ENCODE measurements at regions of chr20 and their contacts with region 1.

Region 1: DNA sequence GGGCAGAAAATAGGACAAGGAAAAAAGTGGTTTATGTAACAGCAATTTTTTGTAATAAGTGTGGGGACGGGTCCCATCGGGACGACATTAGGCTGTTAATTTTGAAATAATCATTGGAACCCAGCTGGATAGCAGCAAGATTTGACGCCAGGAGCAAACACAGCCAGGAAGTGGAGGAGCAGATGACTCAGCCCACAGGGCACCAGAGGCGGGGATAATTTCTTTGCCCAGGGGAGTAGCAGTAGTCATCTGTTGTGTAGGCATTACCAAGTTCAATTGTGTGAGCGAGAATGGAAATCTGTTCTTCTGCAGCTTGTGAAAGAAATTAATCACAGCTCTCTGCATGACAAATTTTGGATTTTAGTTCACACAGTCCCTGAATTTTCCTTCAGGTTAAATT is 22.6 kb upstream of the RIN2 start:
- DNase-seq: peak; percentile 3
- ATAC-seq: peak; percentile 77
- H3K4me3 ChIP-seq: no peak overlapping the region
- H3K27ac ChIP-seq: no peak overlapping the region
- H3K4me1 ChIP-seq: no peaks in the 10 kb centered on the region
- H3K27me3 ChIP-seq: no peaks in the 10 kb centered on the region
- CTCF ChIP-seq: no peak
- EP300 ChIP-seq: no peak
- POLR2A ChIP-seq: no peak
- RAD21 ChIP-seq: no peak

Region 2: GRCh38 chr20:19583532-19584175 is 151.8 kb before region 1 on chr20:
- CTCF ChIA-PET with region 1: no interaction called
- POLR2A ChIA-PET with region 1: no interaction called
- RAD21 ChIA-PET with region 1: no interaction called
- SMC1A ChIA-PET with region 1: no interaction called
- in situ Hi-C with region 1: no loop called
- intact Hi-C with region 1: no loop called
- DNase-seq: no peak
- ATAC-seq: peak; percentile 87
- H3K4me3 ChIP-seq: no peak overlapping the region
- H3K27ac ChIP-seq: no peak overlapping the region
- H3K4me1 ChIP-seq: no peaks in the 10 kb centered on the region
- H3K27me3 ChIP-seq: no peaks in the 10 kb centered on the region; a peak in 2 of 4 replicates
- CTCF ChIP-seq: peak; percentile 70 to 87 (median 73)
- EP300 ChIP-seq: no peak
- POLR2A ChIP-seq: no peak
- RAD21 ChIP-seq: peak; percentile 95

Region 3: DNA sequence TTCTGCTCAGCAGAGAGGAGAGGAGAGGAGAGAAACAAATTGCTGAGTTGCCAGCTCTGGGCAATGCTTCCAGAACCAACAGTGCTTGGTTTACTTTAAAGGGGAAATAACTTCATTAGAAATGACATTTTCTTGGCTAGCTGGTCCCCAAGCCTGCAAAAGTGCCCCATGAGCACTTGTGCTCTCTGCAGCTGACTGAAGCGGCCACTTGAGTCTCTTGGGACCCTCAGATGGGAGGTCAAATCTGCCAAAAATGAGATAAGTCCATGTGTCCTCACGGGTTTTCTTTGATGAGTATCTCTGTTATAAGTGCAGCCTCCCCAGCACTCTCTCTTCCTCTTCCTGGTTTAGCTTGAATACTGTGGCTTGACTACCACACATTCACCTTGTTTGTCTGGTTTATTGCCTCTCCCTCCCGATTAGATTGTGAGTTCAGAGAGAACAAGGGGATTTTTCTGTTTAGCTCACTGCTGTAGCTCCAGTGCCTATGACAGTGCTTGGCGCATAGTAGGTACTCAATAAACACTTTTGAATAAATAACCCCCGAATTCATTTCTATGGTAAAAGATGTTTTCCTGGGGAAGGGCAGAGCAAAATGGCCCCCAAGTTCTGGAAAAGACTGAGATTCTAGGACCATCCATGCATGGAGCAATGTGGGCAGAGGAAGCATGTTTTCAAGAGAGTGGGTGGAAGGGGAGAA is 15.6 kb after region 1 on chr20:
- CTCF ChIA-PET with region 1: interaction called, 7 read pairs
- POLR2A ChIA-PET with region 1: interaction called, 3 read pairs
- RAD21 ChIA-PET with region 1: interaction called, 8 read pairs
- SMC1A ChIA-PET with region 1: interaction called, 19 read pairs
- in situ Hi-C with region 1: no loop called
- intact Hi-C with region 1: no loop called
- DNase-seq: no peak
- ATAC-seq: peak; percentile 71
- H3K4me3 ChIP-seq: no peak overlapping the region
- H3K27ac ChIP-seq: no peak overlapping the region
- H3K4me1 ChIP-seq: no peaks in the 10 kb centered on the region
- H3K27me3 ChIP-seq: no peaks in the 10 kb centered on the region; a peak in 1 of 4 replicates
- CTCF ChIP-seq: no peak
- EP300 ChIP-seq: no peak
- POLR2A ChIP-seq: no peak
- RAD21 ChIP-seq: no peak

Measured in GM12878 (cell line).